PC-9 (cell line): ENCODE measurements at regions of chr2 and their contacts with region 1.

Region 1: GRCh38 chr2:232748038-232748437 is 28.3 kb downstream of the KCNJ13 start:
- DNase-seq: no peak
- H3K4me3 ChIP-seq: no peak overlapping the region
- H3K27ac ChIP-seq: no peak overlapping the region
- H3K4me1 ChIP-seq: no peaks in the 10 kb centered on the region
- H3K27me3 ChIP-seq: no peaks in the 10 kb centered on the region
- CTCF ChIP-seq: no peak

Region 2: GRCh38 chr2:232731470-232731869 is 16.6 kb before region 1 on chr2:
- CTCF ChIA-PET with region 1: no interaction called
- POLR2A ChIA-PET with region 1: interaction called, 10 read pairs
- intact Hi-C with region 1: no loop called
- DNase-seq: no peak
- H3K4me3 ChIP-seq: no peak overlapping the region
- H3K27ac ChIP-seq: no peak overlapping the region
- H3K4me1 ChIP-seq: no peaks in the 10 kb centered on the region
- H3K27me3 ChIP-seq: no peaks in the 10 kb centered on the region
- CTCF ChIP-seq: no peak

Region 3: DNA sequence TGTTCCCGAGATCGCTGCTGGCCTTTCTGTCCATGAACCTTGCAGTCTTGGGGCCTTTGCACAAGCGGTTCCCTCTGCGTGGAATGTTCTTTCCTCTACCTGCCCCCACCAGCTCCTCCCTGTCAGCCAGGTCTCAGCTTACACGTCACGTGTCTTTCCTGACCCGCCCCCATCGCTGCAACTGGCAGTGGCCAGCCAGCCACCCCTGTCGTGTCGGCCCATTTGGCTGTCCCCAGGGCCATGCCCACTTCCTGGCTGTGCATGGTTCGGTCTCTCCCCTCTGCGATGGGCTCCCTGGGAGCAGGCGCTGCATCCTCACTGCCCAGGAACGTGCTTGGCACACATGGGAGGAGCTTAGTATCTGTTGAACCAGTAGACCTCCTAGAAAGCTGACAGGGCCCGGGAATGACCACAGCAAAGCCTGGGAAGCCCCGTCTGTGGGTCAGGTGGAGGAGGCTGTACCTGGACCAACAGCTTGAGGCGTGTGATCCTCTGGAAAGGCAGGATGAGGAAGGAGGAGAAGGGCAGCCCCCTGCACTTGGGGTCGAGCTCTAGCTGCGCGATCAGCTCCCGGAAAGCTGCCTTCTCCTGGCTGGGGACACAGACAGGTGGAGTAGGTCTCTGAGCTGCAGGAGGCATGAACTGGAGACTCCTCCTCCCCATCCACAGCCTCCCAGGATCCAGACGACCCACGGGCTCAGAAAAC is 143.0 kb after region 1 on chr2:
- CTCF ChIA-PET with region 1: no interaction called
- POLR2A ChIA-PET with region 1: no interaction called
- intact Hi-C with region 1: no loop called
- DNase-seq: peak; percentile 62 to 99
- H3K4me3 ChIP-seq: no peak overlapping the region
- H3K27ac ChIP-seq: no peak overlapping the region
- H3K4me1 ChIP-seq: peaks cover 3% of the 10 kb centered on the region
- H3K27me3 ChIP-seq: no peaks in the 10 kb centered on the region
- CTCF ChIP-seq: no peak